ENCODE measurements at regions of chr1 and their contacts with region 1.

Region 1: DNA sequence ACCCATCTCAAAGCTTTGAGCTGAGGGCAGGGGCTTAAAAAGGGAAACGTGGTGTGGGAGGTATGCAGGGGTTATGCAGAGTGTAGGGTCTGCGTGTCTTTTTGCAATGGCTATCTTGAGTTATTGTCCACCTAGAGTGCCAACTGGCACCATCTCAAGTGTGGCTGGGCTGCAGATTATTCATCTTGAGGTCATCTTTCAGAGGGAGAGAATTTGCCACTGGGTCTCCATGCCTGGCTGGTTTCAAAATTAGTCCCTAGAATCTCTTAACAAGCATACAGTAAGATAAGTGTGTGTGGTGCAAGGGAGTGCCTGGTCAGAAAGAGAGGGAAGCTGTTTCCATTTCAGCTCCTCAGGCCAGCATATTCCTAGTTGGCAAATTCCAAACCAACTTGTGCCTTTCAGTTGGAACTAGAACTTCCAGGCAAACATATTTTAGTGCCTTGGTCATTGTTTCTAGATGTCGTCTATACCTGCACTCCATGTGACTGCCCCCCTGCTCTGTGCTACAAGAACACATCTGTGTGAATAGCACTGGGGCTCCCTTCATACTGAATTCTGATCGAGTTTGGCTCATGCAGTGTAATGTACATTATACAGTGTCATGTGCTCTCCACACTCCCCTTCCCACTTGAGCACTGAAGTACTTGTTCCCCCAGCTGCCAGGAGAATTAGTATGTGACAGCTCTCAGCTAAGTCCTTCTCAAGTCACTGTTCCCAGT is 5.0 kb upstream of the OR2T8 start:
- DNase-seq: peak; percentile 93
- ATAC-seq: peak; percentile 90
- H3K4me3 ChIP-seq: peak overlapping the region; percentile 39
- H3K27ac ChIP-seq: peak overlapping the region; percentile 45
- H3K4me1 ChIP-seq: peaks cover 25% of the 10 kb centered on the region
- H3K27me3 ChIP-seq: no peaks in the 10 kb centered on the region
- CTCF ChIP-seq: no peak

Region 2: DNA sequence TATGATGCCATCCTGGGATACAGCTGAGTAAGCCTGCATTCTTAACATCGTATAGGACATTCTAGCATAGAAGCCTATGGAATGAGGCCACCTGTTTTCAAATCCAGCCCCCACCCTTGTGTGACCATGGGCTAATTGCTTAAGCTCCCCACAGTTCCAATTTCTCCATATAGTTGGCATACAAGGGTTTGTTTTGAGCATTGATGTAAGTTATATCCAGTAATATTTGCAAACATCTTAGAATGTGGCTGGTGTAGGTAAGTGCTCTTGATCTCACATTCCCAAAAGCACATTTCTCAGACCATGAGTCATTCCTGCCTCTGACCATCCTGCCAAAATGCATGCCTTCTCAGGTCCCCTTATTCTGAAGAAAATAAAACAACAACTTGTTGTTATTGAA is 168.6 kb before region 1 on chr1:
- CTCF ChIA-PET with region 1: no interaction called
- POLR2A ChIA-PET with region 1: no interaction called
- intact Hi-C with region 1: loop called (anchors 5 kb)
- DNase-seq: peak; percentile 85
- ATAC-seq: peak; percentile 70
- H3K4me3 ChIP-seq: no peak overlapping the region
- H3K27ac ChIP-seq: no peak overlapping the region
- H3K4me1 ChIP-seq: peaks cover 31% of the 10 kb centered on the region
- H3K27me3 ChIP-seq: no peaks in the 10 kb centered on the region
- CTCF ChIP-seq: no peak

Region 3: DNA sequence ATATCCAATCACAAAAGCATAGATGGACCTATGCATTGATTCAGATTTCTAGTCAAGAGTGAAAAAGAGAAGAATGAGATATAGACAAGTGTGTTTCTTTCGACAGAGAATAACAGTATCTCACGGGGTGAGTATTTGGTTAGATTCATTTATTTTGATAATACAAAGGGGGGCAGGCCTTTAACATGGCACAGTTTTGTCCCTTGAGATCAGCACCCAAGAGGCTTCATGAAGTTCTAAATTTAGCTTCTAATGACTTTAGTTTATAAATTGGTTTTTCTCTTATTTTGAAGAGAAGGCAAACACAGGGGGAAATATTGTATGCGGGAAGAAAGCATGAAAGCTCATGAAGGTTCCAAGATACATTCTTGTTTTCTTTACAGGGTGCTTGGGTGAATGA is 154.6 kb before region 1 on chr1 and contains the start of gene OR1C1:
- CTCF ChIA-PET with region 1: no interaction called
- POLR2A ChIA-PET with region 1: no interaction called
- intact Hi-C with region 1: no loop called
- DNase-seq: no peak
- ATAC-seq: no peak
- H3K4me3 ChIP-seq: no peak within 1 kb of the TSS
- H3K27ac ChIP-seq: no peak within 1 kb of the TSS
- H3K4me1 ChIP-seq: no peaks in the 10 kb centered on the region
- H3K27me3 ChIP-seq: no peaks in the 10 kb centered on the region
- CTCF ChIP-seq: no peak
- total RNA-seq, gene OR1C1: not detected in 2 replicates

Region 4: GRCh38 chr1:248029770-248030169 is 114.7 kb after region 1 on chr1 and contains the start of gene OR2L2:
- CTCF ChIA-PET with region 1: no interaction called
- POLR2A ChIA-PET with region 1: no interaction called
- intact Hi-C with region 1: no loop called
- DNase-seq: no peak
- ATAC-seq: no peak
- H3K4me3 ChIP-seq: no peak within 1 kb of the TSS
- H3K27ac ChIP-seq: no peak within 1 kb of the TSS
- H3K4me1 ChIP-seq: no peaks in the 10 kb centered on the region
- H3K27me3 ChIP-seq: no peaks in the 10 kb centered on the region
- CTCF ChIP-seq: no peak
- total RNA-seq, gene OR2L2: 0.06 TPM in 1 of 2 replicates, not detected in the other

Region 5: GRCh38 chr1:248155927-248156326 is 240.8 kb after region 1 on chr1:
- CTCF ChIA-PET with region 1: no interaction called
- POLR2A ChIA-PET with region 1: no interaction called
- intact Hi-C with region 1: no loop called
- DNase-seq: no peak
- ATAC-seq: no peak
- H3K4me3 ChIP-seq: no peak overlapping the region
- H3K27ac ChIP-seq: no peak overlapping the region
- H3K4me1 ChIP-seq: peaks cover 9% of the 10 kb centered on the region
- H3K27me3 ChIP-seq: no peaks in the 10 kb centered on the region
- CTCF ChIP-seq: no peak

Measured in PC-3 (cell line).